ENCODE measurements at regions of chr19 and their contacts with region 1.

Region 1: DNA sequence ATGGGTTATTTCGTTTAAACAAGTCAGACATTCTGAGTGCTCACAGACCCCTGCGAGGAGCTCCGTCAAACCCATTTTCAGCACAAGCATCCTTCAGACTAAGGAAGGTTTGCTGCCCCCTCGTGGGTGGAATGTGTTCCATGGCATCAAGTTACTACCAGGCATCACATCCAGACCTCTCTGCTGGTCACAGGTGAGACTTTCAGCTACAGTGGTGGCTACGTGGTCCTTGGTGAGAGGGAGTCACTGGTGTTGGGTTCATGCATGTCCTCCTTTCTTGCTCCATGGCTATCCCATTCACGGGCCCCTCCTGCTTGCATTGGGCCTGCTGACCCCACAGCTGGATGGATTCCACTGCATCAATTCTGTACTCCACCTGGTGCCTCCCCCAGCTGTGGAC is 9.1 kb upstream of the LILRB5 start:
- DNase-seq: peak; percentile 70
- H3K4me3 ChIP-seq: no peak overlapping the region
- H3K27ac ChIP-seq: no peak overlapping the region
- H3K4me1 ChIP-seq: no peaks in the 10 kb centered on the region
- H3K27me3 ChIP-seq: peaks cover 6 to 9% of the 10 kb centered on the region in 2 experiments
- CTCF ChIP-seq: peak; percentile 72 to 83
- POLR2A ChIP-seq: no peak

Region 2: GRCh38 chr19:53808710-53809125 is 457.4 kb before region 1 on chr19:
- CTCF ChIA-PET with region 1: interaction called, 13 read pairs
- POLR2A ChIA-PET with region 1: no interaction called
- dilution Hi-C with region 1: no loop called
- intact Hi-C with region 1: no loop called
- DNase-seq: peak; percentile 47
- H3K4me3 ChIP-seq: no peak overlapping the region
- H3K27ac ChIP-seq: no peak overlapping the region
- H3K4me1 ChIP-seq: peaks cover 10% of the 10 kb centered on the region
- H3K27me3 ChIP-seq: no peaks in the 10 kb centered on the region
- CTCF ChIP-seq: peak; percentile 51 to 59
- POLR2A ChIP-seq: no peak

Region 3: GRCh38 chr19:54147676-54148075 is 118.5 kb before region 1 on chr19:
- CTCF ChIA-PET with region 1: no interaction called
- POLR2A ChIA-PET with region 1: no interaction called
- dilution Hi-C with region 1: no loop called
- intact Hi-C with region 1: no loop called
- DNase-seq: no peak
- H3K4me3 ChIP-seq: no peak overlapping the region
- H3K27ac ChIP-seq: no peak overlapping the region
- H3K4me1 ChIP-seq: no peaks in the 10 kb centered on the region
- H3K27me3 ChIP-seq: no peaks in the 10 kb centered on the region
- CTCF ChIP-seq: no peak
- POLR2A ChIP-seq: no peak

Region 4: GRCh38 chr19:54159352-54160181 is 106.6 kb before region 1 on chr19 and contains the start of gene LENG1:
- CTCF ChIA-PET with region 1: interaction called, 5 read pairs
- POLR2A ChIA-PET with region 1: interaction called, 10 read pairs
- dilution Hi-C with region 1: no loop called
- intact Hi-C with region 1: no loop called
- DNase-seq: peak; percentile 100
- H3K4me3 ChIP-seq: peak within 1 kb of the TSS; percentile 56 to 80 (median 77)
- H3K27ac ChIP-seq: peak within 1 kb of the TSS; percentile 71
- H3K4me1 ChIP-seq: peaks cover 18% of the 10 kb centered on the region
- H3K27me3 ChIP-seq: peaks cover 0 to 8% of the 10 kb centered on the region in 2 experiments
- CTCF ChIP-seq: peak; percentile 24 to 29
- POLR2A ChIP-seq: peak; percentile 83
- total RNA-seq, gene LENG1: 5.0 and 6.9 TPM in 2 replicates

Region 5: DNA sequence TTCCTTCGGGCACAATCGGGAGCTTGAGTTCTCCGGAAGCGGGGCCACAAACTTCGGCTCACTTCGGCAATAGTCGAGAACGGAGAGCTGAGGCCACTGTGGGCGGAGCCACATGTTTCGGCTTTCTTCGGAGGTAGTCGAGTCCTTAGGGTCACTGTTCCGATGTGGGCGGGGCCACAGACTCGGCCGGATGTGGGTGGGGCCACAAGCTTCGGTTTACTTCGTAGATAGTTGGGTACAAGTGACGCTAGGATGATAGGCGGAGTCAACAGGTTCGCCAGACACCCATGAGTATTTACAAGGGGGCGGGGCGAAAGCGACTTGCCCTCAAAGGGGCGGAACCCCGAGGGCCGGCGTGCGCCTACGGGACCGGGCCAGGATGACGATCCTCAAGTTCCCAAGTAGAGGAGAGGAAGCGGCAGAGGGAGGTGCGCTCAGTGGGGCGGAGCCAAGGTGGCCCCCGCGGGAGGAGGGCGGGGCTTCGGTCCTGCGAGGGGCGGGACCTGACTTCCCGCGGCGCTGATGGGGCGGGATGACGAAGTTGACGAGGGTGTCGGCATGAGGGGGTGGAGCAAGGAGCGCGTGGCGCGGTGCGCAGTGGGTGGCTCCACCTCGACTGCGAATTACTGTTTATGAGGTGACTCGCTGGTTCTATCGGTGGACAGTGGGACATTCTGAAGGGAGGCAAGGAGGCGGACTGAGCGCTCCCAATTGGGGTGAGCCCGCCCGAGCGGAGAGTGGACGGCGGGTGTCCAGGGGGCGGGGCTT is 76.2 kb before region 1 on chr19:
- CTCF ChIA-PET with region 1: interaction called, 12 read pairs
- POLR2A ChIA-PET with region 1: interaction called, 3 read pairs
- dilution Hi-C with region 1: no loop called
- intact Hi-C with region 1: no loop called
- DNase-seq: peak; percentile 100
- H3K4me3 ChIP-seq: peak overlapping the region in 2 of 3 experiments; percentile 72 to 87
- H3K27ac ChIP-seq: peak overlapping the region; percentile 86
- H3K4me1 ChIP-seq: peaks cover 16% of the 10 kb centered on the region
- H3K27me3 ChIP-seq: no peaks in the 10 kb centered on the region
- CTCF ChIP-seq: no peak
- POLR2A ChIP-seq: peak; percentile 47

Region 6: DNA sequence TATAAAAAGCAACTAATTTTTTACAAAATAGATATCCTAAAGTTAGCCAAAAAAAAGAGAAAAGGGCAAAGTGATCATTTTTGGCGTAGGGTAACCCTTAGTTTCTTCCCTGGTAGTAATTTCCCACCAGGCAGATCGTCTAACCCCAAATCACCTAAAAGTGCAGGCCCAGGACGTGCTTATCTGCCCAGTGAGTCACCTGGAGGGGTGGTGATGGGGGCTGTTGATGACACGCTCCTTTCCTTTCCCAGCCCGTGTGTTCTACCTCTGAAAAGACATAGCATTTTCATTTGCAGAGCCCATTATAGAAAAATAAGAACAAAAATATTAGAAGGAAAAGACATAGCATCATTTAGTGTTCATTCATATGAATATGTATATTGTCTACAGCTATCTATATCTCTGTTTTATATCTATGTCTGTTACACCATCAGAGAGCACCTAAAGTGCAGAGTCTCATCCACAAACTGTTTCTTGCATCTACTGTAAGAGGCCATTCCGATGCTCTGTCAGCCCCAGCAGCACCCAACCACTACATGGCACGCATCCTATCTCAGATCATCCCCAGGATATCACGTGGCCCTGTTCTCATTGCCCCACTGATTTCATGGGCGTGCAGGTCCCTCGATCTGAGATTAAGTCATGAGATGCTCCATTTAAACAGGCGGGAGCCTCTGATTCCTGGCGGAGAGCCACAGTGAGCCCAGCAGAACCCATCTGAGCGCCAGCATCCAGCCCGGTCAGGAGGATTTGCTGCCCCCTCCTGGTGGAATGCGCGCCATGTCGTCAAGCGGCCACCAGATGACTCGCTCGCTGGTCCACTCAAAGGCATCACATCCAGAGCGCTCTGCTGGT is 34.8 kb before region 1 on chr19:
- CTCF ChIA-PET with region 1: interaction called, 10 read pairs
- POLR2A ChIA-PET with region 1: no interaction called
- dilution Hi-C with region 1: no loop called
- intact Hi-C with region 1: no loop called
- DNase-seq: peak; percentile 74
- H3K4me3 ChIP-seq: no peak overlapping the region
- H3K27ac ChIP-seq: no peak overlapping the region
- H3K4me1 ChIP-seq: no peaks in the 10 kb centered on the region
- H3K27me3 ChIP-seq: peaks cover 10 to 17% of the 10 kb centered on the region in 2 experiments
- CTCF ChIP-seq: peak; percentile 96 to 100
- POLR2A ChIP-seq: no peak

Region 7: DNA sequence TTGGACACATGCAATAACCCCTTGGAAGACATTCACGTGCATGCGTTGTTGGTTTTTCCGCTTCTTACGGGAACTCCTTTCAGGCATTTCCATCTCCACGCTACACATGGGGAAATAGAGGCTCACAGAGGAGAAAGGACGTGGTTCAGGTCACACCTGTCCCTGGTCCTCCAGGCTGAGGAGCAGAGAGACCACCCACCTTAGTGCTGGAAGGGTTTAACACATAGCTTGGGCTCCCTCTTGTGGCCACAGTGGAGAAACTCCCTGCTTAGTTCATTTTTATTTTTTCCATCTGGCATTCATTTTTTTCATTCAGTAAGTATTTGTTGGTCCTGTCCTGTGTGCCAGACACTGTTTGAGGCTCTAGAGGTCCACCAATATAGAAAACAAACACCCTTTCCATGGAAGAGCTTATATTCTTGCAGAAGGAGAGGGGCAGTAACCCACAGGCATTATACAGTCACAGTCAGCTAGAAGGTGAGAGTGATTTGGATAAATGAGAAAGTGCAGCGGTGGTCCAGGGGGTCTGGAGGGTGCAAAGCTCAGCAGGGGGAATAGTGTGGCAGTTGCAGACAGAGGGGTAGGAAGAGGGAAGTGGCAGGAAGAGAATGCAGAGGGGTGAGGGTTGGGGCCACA is 124.9 kb after region 1 on chr19:
- CTCF ChIA-PET with region 1: interaction called, 13 read pairs
- POLR2A ChIA-PET with region 1: no interaction called
- dilution Hi-C with region 1: no loop called
- intact Hi-C with region 1: no loop called
- DNase-seq: peak; percentile 57
- H3K4me3 ChIP-seq: no peak overlapping the region
- H3K27ac ChIP-seq: no peak overlapping the region
- H3K4me1 ChIP-seq: peaks cover 19% of the 10 kb centered on the region
- H3K27me3 ChIP-seq: peaks cover 1 to 4% of the 10 kb centered on the region in 2 experiments
- CTCF ChIP-seq: peak; percentile 58 to 69
- POLR2A ChIP-seq: no peak

Region 8: DNA sequence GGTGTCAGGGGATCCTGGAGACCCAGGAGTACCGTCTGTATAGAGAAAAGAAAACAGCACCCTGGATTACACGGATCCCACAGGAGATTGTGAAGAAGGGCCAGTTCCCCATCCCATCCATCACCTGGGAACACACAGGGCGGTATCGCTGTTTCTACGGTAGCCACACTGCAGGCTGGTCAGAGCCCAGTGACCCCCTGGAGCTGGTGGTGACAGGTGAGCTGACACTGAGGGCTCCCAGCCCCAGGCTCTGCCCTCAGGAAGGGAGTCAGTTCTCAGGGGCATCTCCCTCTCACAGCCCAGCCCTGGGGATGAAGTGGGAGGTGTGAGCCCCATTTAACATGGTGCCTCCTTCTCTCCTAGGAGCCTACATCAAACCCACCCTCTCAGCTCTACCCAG is 328.6 kb after region 1 on chr19:
- CTCF ChIA-PET with region 1: no interaction called
- POLR2A ChIA-PET with region 1: no interaction called
- dilution Hi-C with region 1: no loop called
- intact Hi-C with region 1: no loop called
- DNase-seq: no peak
- H3K4me3 ChIP-seq: no peak overlapping the region
- H3K27ac ChIP-seq: no peak overlapping the region
- H3K4me1 ChIP-seq: no peaks in the 10 kb centered on the region
- H3K27me3 ChIP-seq: no peaks in the 10 kb centered on the region
- CTCF ChIP-seq: no peak
- POLR2A ChIP-seq: no peak

Measured in endothelial cell of umbilical vein (primary cell).